GM10248 (cell line): ENCODE measurements at regions of chr13 and their contacts with region 1.

Region 1: GRCh38 chr13:33931397-33932311 is 113.7 kb downstream of the RFC3 start:
- DNase-seq: no peak
- CTCF ChIP-seq: peak; percentile 39

Region 2: DNA sequence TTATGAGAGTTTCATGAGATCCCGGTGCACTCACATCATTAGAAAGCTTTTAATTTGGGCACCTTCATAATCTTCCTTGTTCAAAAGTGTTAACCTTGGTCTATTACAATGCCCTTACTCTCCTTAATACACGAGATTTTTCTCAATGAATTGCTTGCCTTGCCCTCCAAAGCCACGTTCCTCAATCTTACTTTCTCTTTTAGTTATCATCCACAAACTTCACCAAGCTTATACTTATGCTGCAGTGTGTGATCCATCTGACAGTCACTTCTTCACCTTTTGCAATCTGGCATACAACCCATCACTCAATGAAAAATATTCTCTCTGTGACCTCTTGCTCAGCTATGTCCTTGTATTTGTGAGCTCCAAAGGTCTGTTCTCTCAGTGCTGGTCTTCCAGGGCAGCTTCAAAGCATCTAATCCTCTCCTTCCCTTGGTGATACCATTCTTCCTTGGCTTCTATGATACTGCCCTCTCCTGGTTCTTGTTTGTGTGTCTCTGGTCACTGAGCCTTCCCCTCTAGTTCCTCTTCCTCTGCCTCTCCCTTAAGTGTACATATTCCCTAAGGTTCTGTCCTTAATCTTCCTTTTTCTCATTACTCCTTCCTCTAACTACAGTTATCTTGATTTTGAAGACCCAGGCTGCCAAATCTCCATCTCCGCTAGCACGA is 443.9 kb before region 1 on chr13:
- CTCF ChIA-PET with region 1: no interaction called
- POLR2A ChIA-PET with region 1: no interaction called
- DNase-seq: peak; percentile 42
- CTCF ChIP-seq: peak; percentile 36

Region 3: GRCh38 chr13:33855371-33855895 is 76.2 kb before region 1 on chr13:
- CTCF ChIA-PET with region 1: no interaction called
- POLR2A ChIA-PET with region 1: no interaction called
- DNase-seq: no peak
- CTCF ChIP-seq: no peak

Region 4: DNA sequence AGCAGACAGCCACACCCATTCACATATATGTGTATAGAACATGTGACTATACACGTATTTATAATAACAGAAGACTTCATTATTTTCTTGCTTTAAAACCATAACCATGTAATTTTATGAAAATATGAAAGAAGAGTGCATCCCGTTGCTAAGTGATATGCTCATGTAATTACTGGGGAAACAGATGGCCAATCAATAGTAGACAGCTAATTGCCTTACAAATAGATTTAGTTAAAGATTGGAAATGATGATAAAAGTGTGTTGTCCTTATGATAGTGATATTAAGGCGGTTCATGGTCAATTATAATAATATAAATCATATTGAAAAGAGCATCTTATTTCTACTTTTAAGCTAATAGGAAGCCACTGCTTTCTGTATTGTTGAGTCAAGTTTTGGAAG is 17.8 kb before region 1 on chr13:
- CTCF ChIA-PET with region 1: interaction called, 12 read pairs
- POLR2A ChIA-PET with region 1: no interaction called
- DNase-seq: no peak
- CTCF ChIP-seq: no peak